Activated CD4-positive, alpha-beta memory T cell treated with anti-CD3 and anti-CD28 coated beads, Interleukin-2, amount 10 ng/mL, durations not matched to agents 7 days and 5 days (primary cell): ENCODE measurements at regions of chr2 and their contacts with region 1.

Region 1: DNA sequence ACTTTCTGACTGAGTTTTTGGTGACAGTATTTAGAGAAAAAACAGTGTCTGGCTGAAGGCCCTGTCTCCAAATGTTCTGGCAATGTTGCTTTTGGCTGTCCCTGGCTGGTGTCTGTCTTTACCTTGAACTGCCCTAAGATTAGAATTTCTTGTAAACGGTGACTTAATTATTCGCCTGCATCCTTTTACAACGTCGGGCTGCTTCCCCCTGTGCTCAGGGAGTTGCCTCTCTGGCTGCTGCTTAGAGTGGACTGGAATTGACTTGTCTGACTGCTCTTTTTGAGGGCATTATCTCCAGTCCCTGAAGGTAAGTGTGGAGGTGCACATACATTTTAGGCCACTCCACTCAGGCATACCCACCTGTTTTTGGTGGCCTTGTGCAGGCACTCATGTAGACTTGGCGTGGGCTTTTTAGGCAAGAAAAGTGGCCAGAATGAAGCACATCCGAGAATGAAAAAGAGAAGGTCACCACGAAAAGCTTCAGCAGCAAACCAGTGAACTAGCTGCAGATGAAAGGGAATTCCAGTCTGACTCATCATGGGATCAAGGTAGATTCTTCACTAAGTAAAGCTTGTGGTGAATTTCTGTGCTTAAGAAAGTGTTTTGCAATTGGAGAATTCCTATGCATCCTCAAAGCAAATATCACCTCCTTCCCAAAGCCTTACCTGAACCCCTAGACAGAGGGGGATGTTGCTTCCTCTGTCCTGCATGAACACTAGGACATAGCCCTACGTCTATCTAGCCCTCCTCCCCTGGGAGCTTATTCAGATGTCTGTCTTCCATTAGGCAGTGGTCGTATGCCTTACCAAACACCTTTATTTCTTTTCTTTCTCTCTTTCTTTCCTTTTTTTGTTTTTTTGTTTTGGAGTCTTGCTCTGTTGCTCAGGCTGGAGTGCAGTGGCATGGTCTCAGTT is 230.3 kb upstream of the TRIB2 start:
- DNase-seq: no peak
- H3K4me3 Mint-ChIP-seq: no peak overlapping the region
- H3K27ac Mint-ChIP-seq: no peak overlapping the region
- H3K4me1 Mint-ChIP-seq: peaks cover 62% of the 10 kb centered on the region
- H3K27me3 Mint-ChIP-seq: no peaks in the 10 kb centered on the region

Region 2: DNA sequence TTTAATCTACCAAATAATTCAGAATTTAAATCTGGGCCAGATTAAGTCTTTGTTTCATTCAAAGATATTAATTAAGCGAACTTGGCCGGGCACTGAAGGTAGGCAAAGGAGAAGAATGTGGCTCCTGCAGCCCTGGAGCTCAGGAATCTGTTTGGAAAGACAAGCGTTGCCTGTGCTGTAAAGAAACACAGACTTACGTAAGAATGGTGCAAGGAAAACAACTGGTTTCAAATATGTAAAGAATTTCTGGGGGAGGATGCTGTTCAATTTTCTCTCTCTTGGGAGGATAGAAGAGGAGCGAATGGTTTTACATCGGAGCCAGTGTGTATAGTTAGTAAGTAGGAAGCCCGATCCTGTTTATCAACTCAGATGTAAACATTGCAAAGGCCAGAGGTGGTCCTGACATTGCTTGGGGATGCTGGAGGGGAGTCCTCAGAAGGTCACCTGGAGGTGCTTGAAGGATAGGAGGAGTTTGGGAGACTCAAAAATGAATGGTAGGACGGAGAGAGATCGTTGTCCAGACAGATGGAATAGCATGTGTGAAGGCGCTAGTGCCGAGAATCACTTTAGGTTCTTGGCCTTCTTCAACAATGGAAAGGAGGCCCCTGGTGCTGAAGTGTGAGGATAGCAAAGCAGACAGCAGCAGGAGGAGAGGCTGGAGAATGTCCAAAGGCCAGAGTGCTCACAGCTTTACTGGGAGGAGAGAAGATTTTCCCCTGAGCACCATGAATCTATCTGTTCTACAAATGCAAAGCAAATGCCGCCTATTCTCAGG is 284.0 kb before region 1 on chr2:
- CTCF ChIA-PET with region 1: no interaction called
- POLR2A ChIA-PET with region 1: no interaction called
- DNase-seq: no peak
- H3K4me3 Mint-ChIP-seq: no peak overlapping the region
- H3K27ac Mint-ChIP-seq: no peak overlapping the region
- H3K4me1 Mint-ChIP-seq: no peaks in the 10 kb centered on the region
- H3K27me3 Mint-ChIP-seq: peaks cover 4% of the 10 kb centered on the region

Region 3: GRCh38 chr2:12514631-12515433 is 28.4 kb after region 1 on chr2:
- CTCF ChIA-PET with region 1: interaction called, 3 read pairs
- POLR2A ChIA-PET with region 1: interaction called, 10 read pairs
- DNase-seq: peak; percentile 65
- H3K4me3 Mint-ChIP-seq: peak overlapping the region; percentile 1
- H3K27ac Mint-ChIP-seq: peak overlapping the region; percentile 82
- H3K4me1 Mint-ChIP-seq: peaks cover 41% of the 10 kb centered on the region
- H3K27me3 Mint-ChIP-seq: peaks cover 6% of the 10 kb centered on the region

Region 4: GRCh38 chr2:12543978-12544558 is 57.6 kb after region 1 on chr2:
- CTCF ChIA-PET with region 1: no interaction called
- POLR2A ChIA-PET with region 1: no interaction called
- DNase-seq: no peak
- H3K4me3 Mint-ChIP-seq: no peak overlapping the region
- H3K27ac Mint-ChIP-seq: no peak overlapping the region
- H3K4me1 Mint-ChIP-seq: no peaks in the 10 kb centered on the region
- H3K27me3 Mint-ChIP-seq: no peaks in the 10 kb centered on the region